ENCODE measurements at regions of chr10 and their contacts with region 1.

Region 1: GRCh38 chr10:30186371-30186875 is 127.0 kb upstream of the JCAD start:
- DNase-seq: no peak
- ATAC-seq: peak; percentile 38 to 44
- H3K4me3 ChIP-seq: no peak overlapping the region
- H3K27ac ChIP-seq: peak overlapping the region; percentile 82
- H3K4me1 ChIP-seq: peaks cover 5% of the 10 kb centered on the region
- H3K27me3 ChIP-seq: no peaks in the 10 kb centered on the region

Region 2: DNA sequence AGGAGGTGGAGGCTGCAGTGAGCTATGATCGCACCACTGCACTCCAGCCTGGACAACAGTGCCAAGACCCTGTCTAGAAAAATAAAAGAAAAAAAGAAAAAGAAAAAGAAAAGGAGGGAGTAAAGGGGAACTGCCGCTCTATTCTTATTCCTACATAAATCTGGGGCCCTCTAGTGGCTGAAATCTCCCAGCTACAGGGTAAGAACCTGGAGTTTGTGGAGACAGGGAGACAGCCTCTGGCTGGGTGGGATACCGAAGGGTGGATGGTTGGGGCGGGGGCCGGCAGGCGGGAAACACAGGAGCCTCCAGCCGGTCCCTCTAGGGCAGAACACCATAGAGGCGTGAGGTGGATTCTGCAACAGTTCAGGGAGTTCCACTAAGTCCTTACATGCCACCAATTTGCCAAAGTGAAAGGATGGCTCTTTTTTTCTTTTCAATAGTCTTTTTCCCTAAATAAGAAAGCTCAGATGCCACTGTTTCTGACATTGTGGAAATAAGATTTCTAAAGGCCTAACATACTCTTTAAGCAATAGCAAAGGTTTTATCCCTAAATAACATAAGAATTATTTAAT is 669.0 kb before region 1 on chr10:
- intact Hi-C with region 1: no loop called
- DNase-seq: peak in 2 of 3 donors; percentile 28 to 47
- ATAC-seq: peak in 1 of 2 donors; percentile 27
- H3K4me3 ChIP-seq: no peak overlapping the region
- H3K27ac ChIP-seq: no peak overlapping the region
- H3K4me1 ChIP-seq: no peaks in the 10 kb centered on the region
- H3K27me3 ChIP-seq: no peaks in the 10 kb centered on the region

Region 3: DNA sequence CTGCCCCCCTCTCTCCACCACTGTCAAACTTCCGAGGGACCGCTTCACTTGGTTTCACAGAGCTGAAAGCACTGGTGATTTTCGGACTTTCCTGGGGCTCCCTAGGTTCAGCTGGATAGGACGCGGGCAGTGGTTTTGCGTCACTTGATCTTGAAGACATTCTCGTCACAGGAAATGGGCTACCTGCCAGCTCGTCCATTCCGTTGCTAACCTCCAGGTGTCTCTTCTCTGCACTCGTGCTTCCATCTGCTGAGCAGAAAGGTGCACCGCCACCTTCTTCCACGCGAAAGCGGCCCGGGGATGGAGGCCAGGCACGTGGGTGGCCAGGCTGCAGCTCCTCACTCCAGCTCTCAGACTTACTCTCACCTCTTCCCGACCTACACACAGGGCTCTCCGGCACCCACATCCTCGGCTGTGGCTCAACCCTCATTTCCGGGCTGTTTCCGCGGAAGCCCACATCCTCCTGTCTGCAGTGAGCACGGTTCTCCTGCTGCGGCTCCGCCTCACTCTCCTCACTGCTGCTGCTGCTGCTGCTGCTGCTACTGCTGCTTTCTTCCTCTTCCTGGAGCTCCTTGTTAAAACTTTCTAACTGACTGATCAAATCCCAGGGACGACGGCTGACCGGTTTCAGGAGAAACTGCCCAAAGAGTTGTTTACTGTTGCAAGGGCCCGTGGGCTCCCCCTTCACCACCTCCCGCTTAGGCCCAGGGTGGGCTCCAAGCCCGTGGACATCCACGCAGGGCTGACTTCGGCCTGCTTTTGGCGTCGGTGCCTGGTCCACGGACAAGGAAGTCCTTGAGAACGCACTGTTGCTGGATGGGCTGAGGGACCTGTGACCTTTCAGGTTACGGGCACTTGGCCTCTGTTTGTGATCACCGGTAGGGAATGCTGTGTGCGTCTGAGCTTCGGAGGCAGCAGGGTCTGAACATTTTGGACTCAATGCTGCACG is 159.1 kb before region 1 on chr10:
- intact Hi-C with region 1: loop called in 1 of 4 experiments (anchors 5 kb)
- DNase-seq: peak; percentile 66 to 83 (median 78)
- ATAC-seq: peak; percentile 55 to 76
- H3K4me3 ChIP-seq: no peak overlapping the region
- H3K27ac ChIP-seq: peak overlapping the region; percentile 31
- H3K4me1 ChIP-seq: peaks cover 11% of the 10 kb centered on the region
- H3K27me3 ChIP-seq: no peaks in the 10 kb centered on the region

Region 4: DNA sequence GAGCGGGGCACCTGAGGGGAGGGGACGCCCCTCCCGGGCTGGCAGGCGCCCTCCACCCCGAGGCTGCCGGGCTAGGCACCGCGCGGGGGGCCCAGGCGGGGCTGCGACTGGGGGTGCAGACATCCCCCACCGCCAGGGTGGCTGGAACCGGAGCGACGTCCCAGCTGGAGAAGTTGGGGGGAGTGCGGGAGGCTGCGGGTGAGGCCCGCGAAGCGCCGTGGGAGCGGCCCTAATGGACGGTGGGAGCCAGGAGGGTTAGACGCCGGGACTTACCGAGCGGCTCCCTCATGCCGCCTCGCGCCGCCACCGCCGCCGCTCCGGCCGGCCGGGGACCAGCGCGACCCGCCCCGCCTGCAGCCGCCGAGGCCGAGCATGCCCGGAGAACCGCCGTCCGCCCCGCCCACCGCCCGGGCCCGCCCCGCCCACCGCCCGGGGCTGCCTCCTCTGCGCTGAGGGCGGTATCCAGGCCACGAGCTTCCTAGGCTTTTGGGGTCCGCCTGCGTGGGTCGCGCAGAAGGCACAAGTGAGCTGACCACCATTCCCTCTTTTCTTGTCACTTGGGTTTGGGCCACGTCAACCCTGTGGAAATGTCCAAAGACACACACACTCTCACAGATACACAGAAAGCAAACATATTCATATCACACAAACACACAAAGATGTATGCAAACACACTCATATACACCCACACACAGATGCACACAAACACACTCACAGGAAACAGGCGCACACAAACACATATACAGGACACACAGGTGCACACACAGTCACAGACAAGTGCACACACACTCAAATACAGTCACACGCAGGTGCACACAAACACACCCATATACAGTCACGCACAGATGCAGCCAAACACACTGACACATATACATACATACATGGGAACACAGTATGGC is 127.0 kb before region 1 on chr10 and contains the start of gene JCAD:
- intact Hi-C with region 1: loop called in 1 of 4 experiments (anchors 10 kb)
- DNase-seq: peak; percentile 83 to 95 (median 94)
- ATAC-seq: peak; percentile 89 to 92
- H3K4me3 ChIP-seq: peak within 1 kb of the TSS; percentile 91
- H3K27ac ChIP-seq: peak within 1 kb of the TSS; percentile 85
- H3K4me1 ChIP-seq: peaks cover 7% of the 10 kb centered on the region
- H3K27me3 ChIP-seq: no peaks in the 10 kb centered on the region
- total RNA-seq, gene JCAD: 29.2 to 76.7 (median 39.8) TPM